ENCODE measurements at regions of chr11 and their contacts with region 1.

Region 1: GRCh38 chr11:129117595-129118350 is 74.4 kb downstream of the ARHGAP32 start:
- DNase-seq: no peak
- H3K4me3 Mint-ChIP-seq: no peak overlapping the region
- H3K27ac Mint-ChIP-seq: no peak overlapping the region
- H3K4me1 Mint-ChIP-seq: peaks cover 10% of the 10 kb centered on the region
- H3K27me3 Mint-ChIP-seq: peaks cover 7% of the 10 kb centered on the region

Region 2: DNA sequence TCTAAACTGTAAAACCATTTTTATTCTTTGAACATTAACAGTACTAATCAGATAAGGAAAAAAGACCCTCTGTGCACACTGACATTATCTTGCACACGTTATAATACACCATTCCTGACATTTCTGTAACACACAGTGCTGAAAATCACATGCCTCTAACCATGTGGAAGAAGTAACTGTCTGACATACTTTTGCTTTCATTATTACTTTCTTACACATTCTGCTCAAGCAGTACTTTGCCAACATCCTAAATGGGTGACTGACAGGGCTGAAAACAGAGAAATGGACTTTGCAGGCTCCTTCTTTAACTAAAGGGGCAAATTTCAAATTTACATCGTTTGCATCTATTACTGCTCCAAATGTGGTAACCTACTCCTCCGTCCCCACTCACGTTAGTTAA is 152.3 kb before region 1 on chr11:
- intact Hi-C with region 1: loop called (anchors 5 kb)
- DNase-seq: no peak
- H3K4me3 Mint-ChIP-seq: peak overlapping the region; percentile 9
- H3K27ac Mint-ChIP-seq: no peak overlapping the region
- H3K4me1 Mint-ChIP-seq: peaks cover 55% of the 10 kb centered on the region
- H3K27me3 Mint-ChIP-seq: peaks cover 1% of the 10 kb centered on the region

Region 3: DNA sequence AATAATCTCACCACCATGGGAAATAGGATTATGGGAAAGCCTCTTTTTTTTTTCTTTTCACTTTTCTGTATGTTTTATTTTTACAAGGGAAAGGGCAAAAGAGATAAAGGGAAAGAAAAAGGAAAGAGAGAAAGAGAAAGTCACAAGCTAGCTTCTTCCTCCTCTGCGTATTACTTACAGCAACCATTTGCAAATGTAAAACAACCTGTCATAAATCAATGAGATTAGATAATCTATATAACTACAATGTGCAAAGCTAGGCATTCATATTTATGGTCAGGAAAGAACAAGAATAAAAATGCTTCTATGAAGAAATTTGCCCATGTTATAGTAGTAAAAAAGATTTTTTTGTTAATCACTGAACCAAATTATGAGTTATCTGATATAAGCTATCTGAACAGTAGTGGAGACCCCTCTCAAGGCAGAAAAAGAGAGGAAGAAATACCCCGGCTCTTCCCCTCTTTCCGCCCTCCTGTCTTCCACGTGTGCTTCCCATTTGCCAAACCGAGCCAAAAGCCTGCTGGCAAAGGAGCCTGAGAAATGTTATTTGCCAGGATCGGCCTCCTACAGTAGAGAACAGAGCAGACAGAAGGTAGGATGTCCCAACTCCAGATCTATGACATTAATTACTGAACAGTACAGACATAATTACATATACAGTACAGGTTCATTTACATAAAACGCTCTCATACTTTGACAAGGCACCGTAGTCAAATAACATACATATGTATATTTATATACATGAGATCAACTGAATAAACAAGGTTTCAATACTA is 24.2 kb after region 1 on chr11:
- intact Hi-C with region 1: no loop called
- DNase-seq: no peak
- H3K4me3 Mint-ChIP-seq: no peak overlapping the region
- H3K27ac Mint-ChIP-seq: no peak overlapping the region
- H3K4me1 Mint-ChIP-seq: no peaks in the 10 kb centered on the region
- H3K27me3 Mint-ChIP-seq: peaks cover 1% of the 10 kb centered on the region

Region 4: DNA sequence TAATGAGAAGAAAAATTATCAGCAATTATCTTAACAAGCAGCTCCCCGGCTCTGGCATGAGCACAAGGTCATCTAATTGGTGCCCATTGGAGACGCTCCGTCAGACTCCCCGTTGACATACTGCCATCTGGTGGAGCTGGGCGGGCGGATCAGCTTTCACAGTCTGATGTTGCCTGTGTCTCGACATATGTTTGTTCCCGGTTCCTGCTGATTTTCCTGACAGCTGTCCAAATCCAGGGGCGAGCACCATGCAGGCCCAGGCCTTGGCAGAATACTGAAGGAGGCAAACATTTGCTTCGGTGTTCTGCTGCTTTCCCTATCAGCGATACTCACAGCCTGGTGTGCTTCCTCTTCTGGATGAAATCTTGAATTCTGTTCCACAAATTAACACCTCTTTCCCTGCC is 214.1 kb after region 1 on chr11:
- intact Hi-C with region 1: loop called (anchors 1 kb)
- DNase-seq: peak; percentile 40
- H3K4me3 Mint-ChIP-seq: no peak overlapping the region
- H3K27ac Mint-ChIP-seq: no peak overlapping the region
- H3K4me1 Mint-ChIP-seq: peaks cover 2% of the 10 kb centered on the region
- H3K27me3 Mint-ChIP-seq: peaks cover 3% of the 10 kb centered on the region

Region 5: DNA sequence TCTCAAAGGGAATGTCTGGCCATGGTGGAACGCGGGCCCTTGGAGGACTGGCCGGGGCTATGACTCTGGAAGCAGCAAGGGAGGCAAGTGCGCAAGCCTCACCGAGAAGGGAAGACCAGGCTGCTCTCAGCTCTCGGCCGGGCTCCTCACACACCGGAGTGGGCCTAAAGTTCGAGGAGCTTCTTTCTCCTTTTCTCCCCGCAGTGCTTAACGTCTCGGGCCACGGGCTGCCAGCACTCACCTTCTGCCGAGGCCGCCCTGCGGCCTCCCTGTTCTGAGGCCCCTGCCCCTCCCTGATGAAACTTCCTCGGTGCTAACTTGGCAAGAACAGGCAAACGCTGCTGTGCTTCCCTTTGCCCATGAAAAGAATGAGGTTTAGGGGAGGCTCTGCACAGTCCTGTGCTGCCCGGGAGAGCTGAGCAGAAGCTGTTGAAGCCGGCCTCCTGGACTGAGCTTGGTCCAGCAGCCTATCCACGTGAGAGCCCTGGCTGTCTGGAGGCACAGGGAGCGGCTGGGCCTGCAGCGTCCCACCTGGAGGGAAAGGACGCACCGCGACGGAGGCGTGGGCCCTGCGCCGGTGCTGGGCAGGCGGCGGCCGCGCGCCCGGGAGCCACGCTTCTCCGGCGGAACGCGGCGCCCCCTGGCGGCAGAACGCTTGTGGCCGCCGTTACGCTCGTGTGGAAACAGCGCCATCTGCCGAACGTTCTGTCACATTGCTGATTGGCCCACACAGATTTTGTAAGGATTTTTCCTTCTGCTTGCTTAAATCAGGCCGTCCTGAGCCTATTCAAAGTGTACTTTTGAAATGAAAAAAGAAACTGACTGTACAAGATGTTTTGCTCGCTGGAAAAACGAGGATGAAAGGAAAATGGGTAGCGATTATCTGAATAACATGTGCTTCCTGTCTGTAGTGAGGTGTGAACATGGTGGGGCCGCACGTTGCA is 632.8 kb after region 1 on chr11:
- intact Hi-C with region 1: loop called (anchors 5 kb)
- DNase-seq: peak; percentile 72
- H3K4me3 Mint-ChIP-seq: no peak overlapping the region
- H3K27ac Mint-ChIP-seq: no peak overlapping the region
- H3K4me1 Mint-ChIP-seq: no peaks in the 10 kb centered on the region
- H3K27me3 Mint-ChIP-seq: peaks cover 18% of the 10 kb centered on the region

Measured in activated T-helper 2 cell treated with anti-CD3 and anti-CD28 coated beads, Interferon-gamma antibody, Interleukin-2, Interleukin-4, amounts not matched to agents 10 μg/mL and 5 μg/mL and 100 μg/mL, durations not matched to agents 14 hours and 24 hours and 36 hours (primary cell).